ENCODE measurements at regions of chr7 and their contacts with region 1.

Region 1: DNA sequence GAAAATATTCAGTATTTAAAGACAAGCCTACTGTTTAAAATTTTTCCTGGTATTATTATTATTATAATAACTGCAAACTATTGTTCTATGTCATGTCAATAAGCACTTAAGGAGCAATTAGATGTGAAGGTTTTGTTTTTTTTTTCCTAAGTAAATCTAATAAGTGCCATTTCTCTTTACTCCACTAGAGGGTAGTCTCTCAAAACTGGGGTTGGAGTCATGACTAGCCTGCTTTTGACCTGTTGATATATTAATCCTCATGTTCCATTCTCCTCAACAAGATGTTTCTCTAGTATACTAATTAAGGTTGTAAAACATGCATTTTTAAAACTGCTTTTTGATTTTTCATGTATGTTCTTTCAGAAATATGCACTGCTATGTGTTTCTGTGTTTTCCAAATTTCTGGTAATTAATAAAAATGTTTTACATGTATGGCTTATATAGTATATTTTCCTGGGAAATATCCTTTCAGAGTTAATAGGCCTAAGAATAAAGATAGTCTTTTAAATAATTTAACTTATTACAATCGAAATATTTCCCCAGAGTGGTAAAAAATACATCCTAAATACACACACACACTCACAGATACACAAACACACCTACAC is 1.0 kb upstream of the LRRN3 start:
- DNase-seq: no peak
- ATAC-seq: no peak
- H3K4me3 Mint-ChIP-seq: peak overlapping the region; percentile 96
- H3K27ac Mint-ChIP-seq: peak overlapping the region; percentile 94
- H3K4me1 Mint-ChIP-seq: peaks cover 51% of the 10 kb centered on the region
- H3K27me3 Mint-ChIP-seq: no peaks in the 10 kb centered on the region
- CTCF ChIP-seq: peak; percentile 78

Region 2: DNA sequence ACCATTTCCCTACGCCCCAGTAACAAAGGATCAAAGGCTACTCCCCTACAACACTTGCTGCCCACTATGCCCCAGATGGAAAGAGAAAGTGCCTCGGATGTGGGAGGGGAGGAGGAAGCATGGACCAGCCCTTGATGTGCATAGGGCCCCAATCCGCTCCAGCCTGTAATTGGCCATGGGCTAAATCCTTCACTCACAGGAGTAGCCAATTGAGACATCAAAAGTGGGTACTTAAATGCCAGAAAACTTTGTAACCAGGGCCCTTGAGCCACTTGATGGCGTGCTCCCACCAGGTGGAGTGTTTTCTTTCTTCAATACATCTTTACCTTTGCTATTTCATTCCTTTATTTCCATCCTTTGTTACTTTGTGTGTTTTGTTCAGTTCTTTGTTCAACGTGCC is 499.5 kb before region 1 on chr7:
- CTCF ChIA-PET with region 1: no interaction called
- POLR2A ChIA-PET with region 1: no interaction called
- intact Hi-C with region 1: loop called (anchors 5 kb)
- DNase-seq: peak; percentile 33
- ATAC-seq: no peak
- H3K4me3 Mint-ChIP-seq: no peak overlapping the region
- H3K27ac Mint-ChIP-seq: no peak overlapping the region
- H3K4me1 Mint-ChIP-seq: no peaks in the 10 kb centered on the region
- H3K27me3 Mint-ChIP-seq: no peaks in the 10 kb centered on the region
- CTCF ChIP-seq: no peak

Region 3: DNA sequence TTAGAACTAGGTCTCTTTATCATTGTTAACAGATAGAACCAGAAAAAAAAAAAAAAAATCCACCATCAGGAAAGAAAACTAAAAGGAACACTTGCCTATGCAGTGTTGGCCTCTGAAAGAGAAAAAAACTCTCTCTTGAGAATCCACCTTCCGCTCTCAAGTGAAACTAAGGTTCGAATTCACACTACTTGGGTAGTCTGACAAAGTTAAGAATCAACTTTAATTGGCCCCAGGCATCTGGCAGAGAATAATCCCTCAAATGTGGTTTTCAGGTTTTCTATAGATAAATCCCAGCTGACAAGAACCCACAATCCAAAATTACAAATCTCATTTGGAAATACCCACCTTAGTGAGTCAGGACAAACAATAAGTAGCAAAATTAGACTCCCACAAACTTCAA is 198.7 kb before region 1 on chr7:
- CTCF ChIA-PET with region 1: no interaction called
- POLR2A ChIA-PET with region 1: no interaction called
- intact Hi-C with region 1: loop called (anchors 10 kb)
- DNase-seq: no peak
- ATAC-seq: no peak
- H3K4me3 Mint-ChIP-seq: no peak overlapping the region
- H3K27ac Mint-ChIP-seq: no peak overlapping the region
- H3K4me1 Mint-ChIP-seq: peaks cover 11% of the 10 kb centered on the region
- H3K27me3 Mint-ChIP-seq: no peaks in the 10 kb centered on the region
- CTCF ChIP-seq: no peak

Region 4: DNA sequence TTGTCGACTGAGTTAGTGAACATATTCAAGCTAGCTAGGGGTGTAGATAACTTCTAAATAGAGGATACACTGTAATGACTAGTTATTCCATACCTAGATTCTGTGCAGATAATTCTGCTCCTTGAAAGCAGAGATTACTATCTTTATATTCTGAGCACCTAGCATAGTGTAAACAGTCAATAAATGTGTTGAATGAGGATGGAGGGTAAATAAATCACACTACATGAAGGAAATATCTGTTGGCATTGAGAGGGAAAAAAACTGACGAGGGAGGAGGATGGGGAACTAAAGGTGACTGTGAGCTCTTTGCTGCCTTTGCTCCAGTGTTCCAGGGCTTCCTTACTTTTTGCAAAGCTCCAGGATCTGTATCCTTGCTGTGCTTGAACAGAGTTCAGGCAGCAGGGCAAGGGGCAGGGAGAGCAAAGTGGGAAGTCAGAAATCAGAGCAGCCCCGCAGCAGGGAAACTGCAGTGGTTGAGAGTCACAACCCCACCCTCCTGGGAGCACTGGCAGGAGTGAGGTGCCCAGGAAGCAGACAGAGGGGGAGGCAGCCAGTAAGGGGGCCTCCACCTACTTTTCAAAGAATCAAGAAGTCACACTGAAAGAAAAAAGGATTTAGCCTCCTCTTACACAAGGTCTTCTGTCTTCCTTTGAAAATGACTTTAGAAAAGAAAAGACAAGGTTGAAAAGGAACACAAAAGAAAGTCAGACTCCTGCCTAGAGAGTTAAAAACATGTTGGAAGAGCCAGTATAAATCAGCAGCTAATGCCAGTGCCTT is 70.8 kb before region 1 on chr7:
- CTCF ChIA-PET with region 1: interaction called, 5 read pairs
- POLR2A ChIA-PET with region 1: interaction called, 15 read pairs
- intact Hi-C with region 1: no loop called
- DNase-seq: peak; percentile 37
- ATAC-seq: peak; percentile 68
- H3K4me3 Mint-ChIP-seq: peak overlapping the region; percentile 40
- H3K27ac Mint-ChIP-seq: peak overlapping the region; percentile 89
- H3K4me1 Mint-ChIP-seq: peaks cover 78% of the 10 kb centered on the region
- H3K27me3 Mint-ChIP-seq: no peaks in the 10 kb centered on the region
- CTCF ChIP-seq: no peak

Region 5: DNA sequence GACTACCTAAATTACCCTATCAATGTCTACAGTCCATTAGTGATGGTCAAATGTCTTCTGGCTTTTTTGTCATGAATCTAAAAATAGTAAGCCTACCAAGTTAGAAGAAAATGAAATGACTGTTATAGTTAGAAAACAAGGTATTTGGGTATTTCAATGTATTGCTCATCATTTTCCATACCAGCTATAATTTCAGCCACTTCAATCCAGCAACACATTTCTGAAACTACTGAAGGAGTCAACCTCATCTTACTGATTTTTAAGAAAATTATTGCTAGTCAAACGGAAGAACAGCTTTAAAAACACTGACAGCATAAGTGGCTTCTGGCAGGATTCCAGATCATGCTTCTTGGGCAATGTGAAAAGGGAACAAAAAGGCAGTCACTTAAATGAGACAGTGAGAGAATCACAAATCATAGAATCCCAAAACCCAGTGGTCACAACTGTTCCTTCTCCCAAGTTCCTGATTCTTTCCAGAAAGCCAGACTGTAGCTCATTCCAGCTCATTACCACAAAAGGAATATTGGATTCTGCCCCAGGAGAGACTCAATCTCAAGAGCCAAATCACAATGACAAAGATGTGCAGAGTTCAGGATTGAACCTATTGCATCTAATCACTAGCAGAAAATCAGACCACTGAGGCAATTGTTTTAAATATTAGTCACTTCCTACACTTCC is 60.2 kb before region 1 on chr7:
- CTCF ChIA-PET with region 1: interaction called, 14 read pairs
- POLR2A ChIA-PET with region 1: interaction called, 24 read pairs
- intact Hi-C with region 1: no loop called
- DNase-seq: peak; percentile 78
- ATAC-seq: peak; percentile 59
- H3K4me3 Mint-ChIP-seq: peak overlapping the region; percentile 44
- H3K27ac Mint-ChIP-seq: peak overlapping the region; percentile 95
- H3K4me1 Mint-ChIP-seq: peaks cover 64% of the 10 kb centered on the region
- H3K27me3 Mint-ChIP-seq: no peaks in the 10 kb centered on the region
- CTCF ChIP-seq: no peak

Region 6: DNA sequence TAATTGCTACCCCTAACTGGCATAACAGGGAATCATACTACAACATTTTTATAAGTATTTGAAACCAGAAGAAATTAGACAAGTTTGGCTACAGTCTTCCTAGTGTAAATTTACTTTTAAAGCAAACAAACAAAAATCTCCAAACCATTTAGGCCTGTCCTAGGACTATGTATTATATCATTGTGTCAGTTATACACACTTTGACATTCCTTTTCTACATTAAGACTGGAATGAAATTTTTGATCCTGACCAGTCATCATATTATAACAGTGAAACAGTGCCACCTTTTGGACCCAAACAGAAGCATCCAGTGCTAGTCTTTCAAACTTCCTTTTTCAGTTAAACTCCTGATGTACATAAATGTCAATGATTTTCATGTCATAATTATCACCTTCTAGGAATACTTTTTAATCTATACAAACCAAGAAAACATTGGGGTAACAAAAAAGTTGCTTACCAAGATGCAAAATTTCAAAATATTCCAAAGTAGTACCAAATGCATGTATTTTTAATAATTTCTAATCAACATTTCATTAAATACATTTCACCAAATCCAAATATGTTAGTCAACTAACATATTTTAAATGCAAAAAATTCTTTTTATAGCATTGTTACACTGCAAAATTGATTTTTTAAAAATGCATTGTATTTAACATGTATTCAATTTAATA is 396.7 kb after region 1 on chr7:
- CTCF ChIA-PET with region 1: no interaction called
- POLR2A ChIA-PET with region 1: no interaction called
- intact Hi-C with region 1: loop called (anchors 5 kb)
- DNase-seq: peak; percentile 5
- ATAC-seq: no peak
- H3K4me3 Mint-ChIP-seq: no peak overlapping the region
- H3K27ac Mint-ChIP-seq: no peak overlapping the region
- H3K4me1 Mint-ChIP-seq: no peaks in the 10 kb centered on the region
- H3K27me3 Mint-ChIP-seq: no peaks in the 10 kb centered on the region
- CTCF ChIP-seq: peak; percentile 81